BJ (cell line): ENCODE measurements at regions of chr2 and their contacts with region 1.

Region 1: DNA sequence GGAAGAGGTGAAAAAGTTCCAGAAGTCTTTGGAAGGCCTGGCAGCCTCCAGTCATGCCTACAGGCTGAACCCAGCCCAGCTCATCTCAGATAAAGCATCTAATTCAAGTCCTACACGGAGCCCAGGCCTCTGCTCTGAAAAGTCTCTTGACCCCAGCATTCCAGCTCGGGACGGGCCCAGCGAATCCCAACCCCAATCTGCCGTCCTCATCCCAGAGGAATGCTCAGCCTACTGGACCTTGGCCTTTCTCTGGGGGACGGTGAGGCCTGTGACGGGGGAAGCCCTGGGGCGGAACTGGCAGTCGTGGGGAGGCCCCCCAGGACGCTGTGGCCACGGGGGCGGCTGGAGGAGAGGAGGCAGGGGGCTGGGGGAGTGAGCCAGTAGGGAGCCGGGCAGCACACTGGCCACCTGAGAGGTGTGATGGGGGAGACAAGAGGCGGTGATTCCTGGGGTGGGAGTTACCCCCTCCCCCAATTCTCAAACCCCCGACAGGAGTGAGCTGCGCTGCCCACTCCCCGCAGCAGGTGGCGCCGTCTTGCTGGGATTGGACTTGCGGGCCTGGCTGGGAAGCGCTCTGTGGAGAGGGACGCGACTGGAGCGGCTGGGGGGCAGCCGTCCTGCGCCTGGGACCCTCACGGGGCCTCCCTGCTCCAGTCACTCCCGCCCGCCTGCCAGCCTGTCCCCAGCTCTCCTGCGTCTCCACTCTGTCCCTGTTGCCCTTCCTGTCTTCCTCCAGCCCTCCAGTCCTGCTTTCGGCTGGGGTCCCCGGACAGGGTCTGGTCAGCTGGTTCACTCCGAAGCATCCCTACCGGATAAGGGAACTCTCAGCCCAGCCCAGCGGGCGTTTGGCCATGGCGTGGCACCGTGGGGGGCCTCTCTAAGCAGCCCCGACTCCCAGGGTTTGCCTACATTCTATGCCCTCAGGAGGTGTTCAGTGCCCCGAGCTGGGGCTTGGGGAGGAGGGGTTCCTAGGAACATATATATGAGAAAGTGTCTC is 182.6 kb upstream of the HAAO start:
- DNase-seq: no peak
- H3K4me3 ChIP-seq: peak overlapping the region; percentile 12; the same call in 1 of the 2 replicates
- H3K27me3 ChIP-seq: no peaks in the 10 kb centered on the region
- CTCF ChIP-seq: peak; percentile 92

Region 2: GRCh38 chr2:42964439-42965083 is 10.5 kb before region 1 on chr2:
- CTCF ChIA-PET with region 1: interaction called, 12 read pairs
- POLR2A ChIA-PET with region 1: no interaction called
- DNase-seq: peak; percentile 85
- H3K4me3 ChIP-seq: no peak overlapping the region
- H3K27me3 ChIP-seq: no peaks in the 10 kb centered on the region
- CTCF ChIP-seq: no peak

Region 3: GRCh38 chr2:43018179-43019024 is 43.4 kb after region 1 on chr2:
- CTCF ChIA-PET with region 1: interaction called, 11 read pairs
- POLR2A ChIA-PET with region 1: no interaction called
- DNase-seq: no peak
- H3K4me3 ChIP-seq: no peak overlapping the region
- H3K27me3 ChIP-seq: no peaks in the 10 kb centered on the region
- CTCF ChIP-seq: no peak

Region 4: GRCh38 chr2:43024515-43025011 is 49.5 kb after region 1 on chr2:
- CTCF ChIA-PET with region 1: interaction called, 14 read pairs
- POLR2A ChIA-PET with region 1: no interaction called
- DNase-seq: no peak
- H3K4me3 ChIP-seq: no peak overlapping the region
- H3K27me3 ChIP-seq: no peaks in the 10 kb centered on the region
- CTCF ChIP-seq: peak; percentile 94

Region 5: DNA sequence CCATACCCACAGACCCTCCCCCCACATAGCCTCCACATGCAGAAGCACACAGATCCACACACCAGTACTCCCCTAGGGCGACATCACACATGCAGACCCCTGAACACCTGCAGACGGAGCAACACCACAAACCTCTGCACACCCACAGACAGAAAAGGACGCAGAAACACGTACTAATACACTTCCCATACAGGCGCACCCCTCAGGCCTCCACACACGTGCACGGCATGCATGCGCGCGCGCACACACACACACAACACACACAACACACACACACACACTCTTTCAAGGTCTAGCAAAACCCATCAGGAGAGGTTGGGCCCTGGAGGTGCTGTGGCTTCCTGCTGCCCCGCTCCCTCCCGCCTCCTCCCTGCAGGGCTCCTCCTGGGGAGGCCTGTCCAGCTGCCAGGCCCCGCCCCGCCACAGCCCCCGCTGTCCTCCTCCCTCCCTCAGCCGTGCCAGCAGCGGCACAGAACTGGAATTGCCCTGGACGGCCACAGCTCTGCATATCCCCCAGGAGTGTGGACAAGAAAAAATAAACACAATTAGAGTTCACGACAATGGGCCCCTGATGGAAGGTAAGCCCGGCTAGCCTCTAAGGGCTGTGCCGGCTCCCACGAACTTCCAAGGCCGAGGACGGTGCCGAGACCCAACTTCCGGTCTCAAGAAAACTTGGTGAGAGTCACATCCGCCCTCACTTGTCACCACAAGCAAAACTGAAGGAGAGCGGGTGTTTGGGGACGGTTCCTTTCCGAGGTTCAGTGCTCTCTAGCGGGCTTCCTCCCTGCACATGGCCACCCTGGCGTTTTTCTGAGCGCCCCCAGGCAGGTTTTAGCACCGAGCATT is 244.6 kb after region 1 on chr2:
- CTCF ChIA-PET with region 1: interaction called, 56 read pairs
- POLR2A ChIA-PET with region 1: no interaction called
- DNase-seq: no peak
- H3K4me3 ChIP-seq: peak overlapping the region; percentile 21
- H3K27me3 ChIP-seq: no peaks in the 10 kb centered on the region
- CTCF ChIP-seq: no peak

Region 6: DNA sequence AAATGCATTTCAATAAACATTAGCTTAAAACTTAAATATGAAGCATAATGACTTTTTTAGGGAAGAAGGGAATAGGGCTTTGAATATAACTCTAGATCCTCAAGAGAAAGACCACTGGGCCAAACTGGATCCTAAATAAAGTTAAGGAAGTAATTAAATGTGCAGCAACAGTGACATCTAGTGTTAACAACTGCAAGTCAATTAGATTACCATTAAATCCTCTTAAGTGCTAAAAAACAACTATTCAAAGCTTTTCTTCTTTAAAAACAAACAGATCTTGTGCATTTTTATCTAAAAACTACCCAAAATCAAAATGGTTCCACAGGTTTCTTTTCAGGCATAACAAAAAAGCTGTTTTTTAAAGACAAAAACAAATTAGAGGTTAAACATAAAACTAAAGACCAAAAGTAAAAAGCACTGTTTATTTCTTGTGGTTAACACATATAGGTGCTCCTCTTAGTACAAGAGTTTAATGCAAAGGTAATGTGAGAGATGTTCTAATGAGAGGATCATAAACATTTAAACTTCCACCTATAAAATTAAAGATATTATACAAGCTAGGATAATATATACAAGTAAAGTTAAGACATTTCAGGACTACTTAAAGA is 509.4 kb after region 1 on chr2:
- CTCF ChIA-PET with region 1: interaction called, 13 read pairs
- POLR2A ChIA-PET with region 1: no interaction called
- DNase-seq: peak; percentile 45
- H3K4me3 ChIP-seq: no peak overlapping the region
- H3K27me3 ChIP-seq: no peaks in the 10 kb centered on the region
- CTCF ChIP-seq: peak; percentile 46